Ascending aorta (tissue), 2 donors: ENCODE measurements at regions of chr11 and their contacts with region 1.

Region 1: GRCh38 chr11:96424693-96425092 is 34.9 kb downstream of the JRKL start:
- DNase-seq: no peak
- H3K4me3 ChIP-seq: no peak overlapping the region
- H3K27ac ChIP-seq: no peak overlapping the region
- H3K4me1 ChIP-seq: no peaks in the 10 kb centered on the region
- H3K27me3 ChIP-seq: no peaks in the 10 kb centered on the region
- CTCF ChIP-seq: no peak

Region 2: DNA sequence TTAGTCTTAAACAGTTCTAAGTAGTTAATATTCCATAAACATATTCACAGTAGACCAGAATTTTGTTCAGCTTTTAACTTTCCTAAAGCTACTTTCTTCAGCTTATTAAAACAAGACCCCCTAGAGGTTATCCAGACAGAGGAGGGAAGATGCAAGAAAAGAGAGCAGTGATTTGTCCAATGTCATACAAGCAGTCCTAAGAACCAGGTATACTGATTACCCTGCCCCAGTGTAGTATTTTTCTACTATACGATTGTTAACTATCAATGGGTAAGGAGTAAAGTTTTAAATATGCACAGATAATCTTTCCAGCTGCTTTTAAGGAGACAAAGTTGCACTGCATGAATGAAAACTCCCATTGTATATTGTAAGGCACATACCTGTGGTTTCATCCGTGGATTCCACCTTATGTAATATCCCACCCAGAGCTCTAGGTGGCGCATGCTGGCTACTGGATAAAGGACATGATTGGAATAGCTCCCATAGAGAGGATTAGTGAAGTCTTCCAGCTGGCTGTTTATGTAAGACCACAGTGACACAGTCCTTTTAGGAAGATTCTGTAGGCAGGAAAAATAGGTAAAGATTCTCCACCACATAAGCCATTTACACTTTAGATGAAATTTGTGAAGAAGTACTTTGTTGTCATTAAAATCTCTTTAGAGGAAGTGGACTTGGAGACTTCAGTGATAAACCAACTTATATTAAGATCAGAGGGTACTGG is 588.8 kb before region 1 on chr11:
- intact Hi-C with region 1: loop called (anchors 10 kb)
- DNase-seq: peak; percentile 10 to 72
- H3K4me3 ChIP-seq: no peak overlapping the region
- H3K27ac ChIP-seq: no peak overlapping the region
- H3K4me1 ChIP-seq: no peaks in the 10 kb centered on the region
- H3K27me3 ChIP-seq: no peaks in the 10 kb centered on the region
- CTCF ChIP-seq: peak; percentile 60 to 86 (median 84)